ENCODE measurements at regions of chr3 and their contacts with region 1.

Region 1: GRCh38 chr3:33372218-33373081 is 67.8 kb downstream of the UBP1 start:
- DNase-seq: peak; percentile 78
- H3K4me3 ChIP-seq: no peak overlapping the region
- H3K27ac ChIP-seq: peak overlapping the region; percentile 13
- H3K4me1 ChIP-seq: peaks cover 10% of the 10 kb centered on the region
- H3K27me3 ChIP-seq: no peaks in the 10 kb centered on the region
- CTCF ChIP-seq: peak; percentile 84 to 97

Region 2: DNA sequence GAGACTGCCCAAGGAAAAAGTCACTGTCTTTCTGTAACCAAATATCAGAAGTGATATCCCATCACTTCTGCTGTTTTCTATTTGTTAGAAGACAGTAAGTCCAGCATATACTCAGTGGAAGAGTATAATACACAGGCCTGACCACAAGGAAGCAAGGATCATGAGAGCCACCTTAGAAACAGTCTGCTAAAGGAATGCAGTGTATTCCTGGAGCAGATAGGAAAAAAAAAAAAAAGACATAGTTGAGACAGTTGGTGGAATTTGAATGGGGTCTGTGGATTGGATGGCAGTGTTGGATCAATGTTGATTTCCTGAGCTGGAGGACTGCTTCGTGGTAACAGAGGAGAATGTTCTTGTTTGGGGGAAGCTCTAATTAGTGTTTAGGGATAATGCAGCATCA is 121.7 kb before region 1 on chr3:
- CTCF ChIA-PET with region 1: no interaction called
- dilution Hi-C with region 1: no loop called
- in situ Hi-C with region 1: no loop called
- intact Hi-C with region 1: loop called (anchors 1 kb)
- DNase-seq: no peak
- H3K4me3 ChIP-seq: no peak overlapping the region
- H3K27ac ChIP-seq: no peak overlapping the region
- H3K4me1 ChIP-seq: no peaks in the 10 kb centered on the region
- H3K27me3 ChIP-seq: no peaks in the 10 kb centered on the region
- CTCF ChIP-seq: no peak

Measured in mammary epithelial cell (primary cell).